ENCODE measurements at regions of chr1 and their contacts with region 1.

Region 1: DNA sequence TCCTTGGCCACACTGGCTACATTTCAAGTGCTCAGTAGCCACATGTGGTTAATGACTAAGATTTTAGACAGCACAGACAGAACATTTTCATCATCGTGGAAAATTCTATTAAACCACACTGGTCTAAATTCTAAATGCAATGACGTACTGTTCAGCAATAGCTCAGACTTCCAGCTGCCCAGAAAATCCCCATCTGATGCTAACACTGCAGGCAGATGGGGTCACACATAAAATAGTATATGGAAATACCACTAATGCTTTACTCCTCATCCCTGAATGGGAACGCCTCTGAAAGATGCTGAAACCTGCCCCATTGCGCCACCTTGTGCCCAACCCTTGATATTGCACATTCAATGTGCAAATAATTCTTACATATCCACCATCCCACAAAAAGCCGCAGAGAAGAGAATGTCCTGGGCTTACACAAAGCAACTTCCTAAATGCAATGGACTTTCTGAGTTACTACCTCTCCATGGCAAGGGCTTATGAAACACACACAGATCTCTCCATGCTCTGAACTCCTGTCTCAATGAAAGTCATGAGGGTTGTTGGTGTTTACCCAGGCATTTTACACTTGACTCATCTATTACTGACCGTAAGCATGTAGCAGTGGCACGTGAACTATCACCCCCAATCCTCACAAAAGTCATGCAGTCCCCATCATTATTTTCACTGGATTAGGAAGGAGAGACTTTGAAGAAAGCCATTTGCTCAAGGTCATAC is 20.3 kb upstream of the SLC5A9 start:
- DNase-seq: peak; percentile 52 to 66
- H3K4me3 ChIP-seq: no peak overlapping the region
- H3K4me3 Mint-ChIP-seq: no peak overlapping the region
- H3K27ac Mint-ChIP-seq: no peak overlapping the region
- H3K4me1 ChIP-seq: no peaks in the 10 kb centered on the region
- H3K4me1 Mint-ChIP-seq: no peaks in the 10 kb centered on the region
- H3K27me3 ChIP-seq: no peaks in the 10 kb centered on the region
- H3K27me3 Mint-ChIP-seq: peaks cover 3% of the 10 kb centered on the region
- CTCF ChIP-seq: peak; percentile 72 to 76

Region 2: DNA sequence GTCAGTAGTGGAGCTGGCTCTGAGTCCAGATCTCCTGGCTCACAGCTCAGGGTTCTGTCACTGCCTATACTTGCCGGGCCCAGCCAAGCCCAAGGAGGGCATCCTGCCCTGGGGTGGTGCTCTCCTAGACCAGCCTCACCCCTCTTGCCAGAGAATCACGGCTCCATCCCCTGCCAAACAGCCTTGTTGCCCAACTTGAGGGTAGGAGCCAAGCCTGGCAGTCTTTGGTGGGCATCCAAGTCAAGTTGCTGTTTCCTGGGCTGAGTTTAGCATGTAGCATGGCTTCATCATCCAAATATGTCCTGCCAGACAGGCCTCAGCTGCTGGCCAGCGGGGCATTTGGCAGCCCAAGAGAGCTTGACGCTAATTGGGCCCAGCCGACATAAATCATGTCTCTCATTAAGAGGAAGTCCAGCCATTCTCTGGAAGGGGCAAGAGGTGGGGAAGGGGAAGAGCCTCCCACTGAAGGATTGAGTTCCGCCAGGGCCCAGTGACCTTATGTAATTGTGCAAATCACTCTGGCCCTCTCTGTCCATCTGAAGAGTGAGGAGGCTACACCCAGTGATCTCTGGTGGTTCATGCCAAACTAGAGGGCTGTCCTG is 182.4 kb before region 1 on chr1:
- CTCF ChIA-PET with region 1: no interaction called
- POLR2A ChIA-PET with region 1: no interaction called
- intact Hi-C with region 1: no loop called
- DNase-seq: no peak
- H3K4me3 ChIP-seq: no peak overlapping the region
- H3K4me3 Mint-ChIP-seq: no peak overlapping the region
- H3K27ac Mint-ChIP-seq: no peak overlapping the region
- H3K4me1 ChIP-seq: no peaks in the 10 kb centered on the region; the same call in 1 of the 2 replicates
- H3K4me1 Mint-ChIP-seq: no peaks in the 10 kb centered on the region
- H3K27me3 ChIP-seq: no peaks in the 10 kb centered on the region
- H3K27me3 Mint-ChIP-seq: peaks cover 2% of the 10 kb centered on the region
- CTCF ChIP-seq: no peak

Region 3: DNA sequence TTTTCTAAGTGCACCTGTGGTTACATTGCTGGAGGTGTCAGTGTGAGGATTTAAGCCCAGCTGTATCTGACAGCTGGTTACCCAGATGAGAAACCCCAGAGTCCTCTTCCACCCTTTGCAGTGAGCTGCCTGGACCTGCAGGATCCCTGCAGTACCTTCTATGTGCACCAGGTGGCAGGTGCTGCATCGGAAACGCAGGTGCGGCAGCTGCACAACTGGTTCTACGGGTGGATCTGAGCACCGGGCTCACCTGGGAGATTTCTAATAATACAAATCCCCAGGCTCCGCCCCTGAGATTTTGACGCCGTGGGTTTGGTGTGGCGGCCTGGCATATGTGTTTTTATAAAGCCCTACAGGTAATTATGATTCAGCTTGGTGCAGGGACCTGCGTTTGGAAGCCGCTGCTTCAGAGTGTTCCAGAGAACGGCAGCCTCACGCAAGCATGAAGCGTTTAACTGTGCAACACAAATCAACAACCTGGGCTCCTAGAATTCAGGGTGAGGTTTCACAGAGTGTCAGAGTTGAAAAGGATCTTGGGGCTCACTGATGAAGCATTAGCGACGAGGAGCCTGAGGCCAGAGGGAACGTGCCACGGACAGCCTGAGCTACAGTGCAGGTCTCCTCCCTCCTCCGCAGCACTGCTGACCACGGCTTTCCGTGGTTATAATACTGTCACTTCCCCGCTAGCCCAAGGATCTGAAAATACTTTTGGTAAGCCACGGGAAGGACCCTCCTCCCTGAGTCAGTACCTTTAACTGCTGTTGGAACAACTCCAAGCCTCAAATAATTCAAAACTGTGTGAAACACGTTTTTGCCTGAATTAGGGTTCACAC is 108.3 kb before region 1 on chr1:
- CTCF ChIA-PET with region 1: interaction called, 11 read pairs
- POLR2A ChIA-PET with region 1: no interaction called
- intact Hi-C with region 1: loop called (anchors 1 kb)
- DNase-seq: peak; percentile 85 to 90
- H3K4me3 ChIP-seq: peak overlapping the region; percentile 27
- H3K4me3 Mint-ChIP-seq: peak overlapping the region; percentile 77
- H3K27ac Mint-ChIP-seq: no peak overlapping the region
- H3K4me1 ChIP-seq: no peaks in the 10 kb centered on the region
- H3K4me1 Mint-ChIP-seq: no peaks in the 10 kb centered on the region
- H3K27me3 ChIP-seq: no peaks in the 10 kb centered on the region
- H3K27me3 Mint-ChIP-seq: peaks cover 3% of the 10 kb centered on the region
- CTCF ChIP-seq: peak; percentile 82 to 90

Region 4: DNA sequence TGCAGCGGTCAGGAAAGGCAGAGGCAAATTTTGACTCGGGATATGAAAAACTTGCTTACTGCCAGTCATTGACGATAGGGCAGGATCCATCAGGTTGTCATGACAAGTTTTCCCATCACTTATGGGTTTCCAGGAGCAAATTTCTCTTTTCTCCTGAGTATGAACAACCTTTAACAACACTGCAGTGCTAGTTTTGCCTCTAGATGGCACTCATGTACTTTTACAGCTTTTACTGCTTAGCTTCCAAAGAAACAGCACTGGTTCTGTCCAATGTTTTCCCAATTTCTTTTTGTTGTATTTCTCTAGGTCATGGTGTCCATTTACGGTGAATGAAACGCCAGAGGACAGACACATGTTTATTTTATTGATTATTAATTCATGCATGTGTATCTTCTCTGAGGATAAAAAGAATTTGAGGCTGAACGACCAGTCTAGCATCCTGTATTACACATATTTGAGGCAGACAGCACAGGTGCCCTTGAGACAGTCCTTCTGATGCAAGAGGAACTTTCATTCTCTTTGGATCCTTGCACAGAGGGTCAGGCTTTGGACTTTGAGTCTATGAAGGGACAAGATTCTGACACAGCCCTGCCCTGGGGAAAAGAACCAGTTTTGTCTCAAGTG is 92.7 kb before region 1 on chr1:
- CTCF ChIA-PET with region 1: interaction called, 19 read pairs
- POLR2A ChIA-PET with region 1: no interaction called
- intact Hi-C with region 1: loop called (anchors 1 kb)
- DNase-seq: peak in 1 of 2 experiments; percentile 48
- H3K4me3 ChIP-seq: no peak overlapping the region
- H3K4me3 Mint-ChIP-seq: no peak overlapping the region
- H3K27ac Mint-ChIP-seq: no peak overlapping the region
- H3K4me1 ChIP-seq: no peaks in the 10 kb centered on the region
- H3K4me1 Mint-ChIP-seq: no peaks in the 10 kb centered on the region
- H3K27me3 ChIP-seq: no peaks in the 10 kb centered on the region
- H3K27me3 Mint-ChIP-seq: peaks cover 2% of the 10 kb centered on the region
- CTCF ChIP-seq: peak; percentile 72 to 76

Region 5: GRCh38 chr1:48236716-48237470 is 34.7 kb after region 1 on chr1:
- CTCF ChIA-PET with region 1: interaction called, 3 read pairs
- POLR2A ChIA-PET with region 1: no interaction called
- intact Hi-C with region 1: loop called (anchors 1 kb)
- DNase-seq: peak in 1 of 2 experiments; percentile 41
- H3K4me3 ChIP-seq: no peak overlapping the region
- H3K4me3 Mint-ChIP-seq: no peak overlapping the region
- H3K27ac Mint-ChIP-seq: no peak overlapping the region
- H3K4me1 ChIP-seq: no peaks in the 10 kb centered on the region
- H3K4me1 Mint-ChIP-seq: peaks cover 8% of the 10 kb centered on the region
- H3K27me3 ChIP-seq: no peaks in the 10 kb centered on the region
- H3K27me3 Mint-ChIP-seq: no peaks in the 10 kb centered on the region
- CTCF ChIP-seq: peak; percentile 44 to 72

Measured in Caco-2 (cell line).